ENCODE measurements at regions of chr14 and their contacts with region 1.

Region 1: GRCh38 chr14:24431569-24432258 is 2.0 kb downstream of the KHNYN start:
- DNase-seq: peak; percentile 96
- ATAC-seq: peak; percentile 70
- H3K4me3 Mint-ChIP-seq: peak overlapping the region; percentile 94
- H3K27ac Mint-ChIP-seq: peak overlapping the region; percentile 97
- H3K4me1 Mint-ChIP-seq: peaks cover 31% of the 10 kb centered on the region
- H3K27me3 Mint-ChIP-seq: no peaks in the 10 kb centered on the region

Region 2: DNA sequence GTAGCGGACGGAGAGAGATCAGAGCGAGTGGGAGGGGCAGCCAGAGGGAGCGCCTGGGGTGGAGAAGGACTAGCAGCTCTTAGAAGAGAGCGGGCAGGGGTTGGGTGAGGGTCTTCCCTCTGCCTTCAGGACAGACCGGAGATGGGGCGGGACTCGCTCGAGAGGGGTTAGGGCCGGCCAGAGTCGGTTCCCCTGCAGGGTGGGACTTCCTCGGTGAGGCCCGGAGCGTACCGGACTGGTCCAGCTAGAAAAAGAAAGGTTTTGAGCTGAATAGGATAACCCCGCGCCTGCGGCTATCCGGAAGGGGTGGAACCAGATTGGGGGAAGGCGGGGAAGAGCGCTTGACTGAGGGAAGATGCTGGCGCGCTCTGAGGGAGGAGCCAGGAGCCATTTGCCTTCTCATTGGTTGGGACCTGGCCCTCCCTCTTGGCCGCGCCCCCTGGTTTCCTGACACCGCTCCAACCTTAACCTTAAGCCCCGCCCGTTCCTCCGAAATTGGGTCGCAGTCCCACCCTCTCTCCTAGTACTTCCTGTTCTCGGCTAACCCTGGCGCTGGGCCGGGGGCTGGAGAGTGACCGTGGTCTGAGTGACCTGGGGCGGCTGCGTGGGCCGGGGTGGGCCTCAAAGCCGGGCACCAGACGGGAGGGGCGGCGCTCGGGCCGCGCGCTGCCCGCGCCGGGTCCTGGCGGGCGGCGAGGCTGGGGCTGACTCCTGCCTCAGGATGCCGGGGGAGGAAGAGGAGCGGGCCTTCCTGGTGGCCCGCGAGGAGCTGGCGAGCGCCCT is 284.5 kb before region 1 on chr14 and contains the start of gene RNF31:
- CTCF ChIA-PET with region 1: no interaction called
- POLR2A ChIA-PET with region 1: no interaction called
- intact Hi-C with region 1: loop called in 1 of 2 experiments (anchors 2 kb)
- DNase-seq: peak; percentile 99
- ATAC-seq: peak; percentile 89
- H3K4me3 Mint-ChIP-seq: peak within 1 kb of the TSS; percentile 94
- H3K27ac Mint-ChIP-seq: peak within 1 kb of the TSS; percentile 97
- H3K4me1 Mint-ChIP-seq: peaks cover 57% of the 10 kb centered on the region
- H3K27me3 Mint-ChIP-seq: no peaks in the 10 kb centered on the region
- total RNA-seq, gene RNF31: 73.7 to 98.4 TPM

Region 3: GRCh38 chr14:24271134-24271833 is 160.4 kb before region 1 on chr14 and contains the start of gene RABGGTA:
- CTCF ChIA-PET with region 1: interaction called, 6 read pairs
- POLR2A ChIA-PET with region 1: no interaction called
- intact Hi-C with region 1: loop called in 1 of 2 experiments (anchors 1 kb)
- DNase-seq: peak; percentile 94
- ATAC-seq: peak; percentile 85
- H3K4me3 Mint-ChIP-seq: peak within 1 kb of the TSS; percentile 83
- H3K27ac Mint-ChIP-seq: peak within 1 kb of the TSS; percentile 97
- H3K4me1 Mint-ChIP-seq: peaks cover 46% of the 10 kb centered on the region
- H3K27me3 Mint-ChIP-seq: no peaks in the 10 kb centered on the region
- total RNA-seq, gene RABGGTA: 52.1 to 56.0 TPM

Region 4: GRCh38 chr14:24324024-24324423 is 107.7 kb before region 1 on chr14:
- CTCF ChIA-PET with region 1: interaction called, 22 read pairs
- POLR2A ChIA-PET with region 1: no interaction called
- intact Hi-C with region 1: no loop called
- DNase-seq: no peak
- ATAC-seq: no peak
- H3K4me3 Mint-ChIP-seq: no peak overlapping the region
- H3K27ac Mint-ChIP-seq: no peak overlapping the region
- H3K4me1 Mint-ChIP-seq: peaks cover 4% of the 10 kb centered on the region
- H3K27me3 Mint-ChIP-seq: peaks cover 2% of the 10 kb centered on the region

Region 5: GRCh38 chr14:24351517-24351916 is 80.2 kb before region 1 on chr14:
- CTCF ChIA-PET with region 1: interaction called, 14 read pairs
- POLR2A ChIA-PET with region 1: no interaction called
- intact Hi-C with region 1: no loop called
- DNase-seq: no peak
- ATAC-seq: no peak
- H3K4me3 Mint-ChIP-seq: no peak overlapping the region
- H3K27ac Mint-ChIP-seq: no peak overlapping the region
- H3K4me1 Mint-ChIP-seq: peaks cover 4% of the 10 kb centered on the region
- H3K27me3 Mint-ChIP-seq: peaks cover 33% of the 10 kb centered on the region

Region 6: DNA sequence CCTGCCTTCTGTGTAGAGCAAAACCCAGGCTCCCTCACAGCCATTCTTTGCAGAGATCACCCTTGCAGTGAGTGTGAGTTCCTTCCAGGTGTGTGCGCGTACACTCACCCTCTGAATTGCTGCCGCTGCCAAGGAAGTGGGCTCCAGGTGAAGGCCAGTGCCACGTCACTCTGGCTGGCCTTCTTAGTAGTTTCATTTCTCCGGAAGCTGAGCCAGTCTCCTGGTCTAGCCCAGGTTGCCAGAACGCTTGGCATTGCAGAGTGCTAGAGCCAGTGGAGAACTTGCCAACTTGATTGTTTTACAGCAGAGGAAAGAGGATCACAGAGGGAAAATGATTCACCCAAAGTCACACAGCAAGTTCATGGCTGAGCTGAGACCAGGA is 13.2 kb before region 1 on chr14:
- CTCF ChIA-PET with region 1: interaction called, 32 read pairs
- POLR2A ChIA-PET with region 1: interaction called, 3 read pairs
- intact Hi-C with region 1: no loop called
- DNase-seq: no peak
- ATAC-seq: no peak
- H3K4me3 Mint-ChIP-seq: no peak overlapping the region
- H3K27ac Mint-ChIP-seq: no peak overlapping the region
- H3K4me1 Mint-ChIP-seq: no peaks in the 10 kb centered on the region
- H3K27me3 Mint-ChIP-seq: no peaks in the 10 kb centered on the region

Region 7: GRCh38 chr14:24662753-24663152 is 231.0 kb after region 1 on chr14:
- CTCF ChIA-PET with region 1: no interaction called
- POLR2A ChIA-PET with region 1: no interaction called
- intact Hi-C with region 1: no loop called
- DNase-seq: no peak
- ATAC-seq: no peak
- H3K4me3 Mint-ChIP-seq: no peak overlapping the region
- H3K27ac Mint-ChIP-seq: peak overlapping the region; percentile 59
- H3K4me1 Mint-ChIP-seq: peaks cover 66% of the 10 kb centered on the region
- H3K27me3 Mint-ChIP-seq: no peaks in the 10 kb centered on the region

Measured in activated CD4-positive, alpha-beta T cell treated with anti-CD3 and anti-CD28 coated beads for 36 hours (primary cell).